Natural killer cell (primary cell): ENCODE measurements at regions of chr7 and their contacts with region 1.

Region 1: GRCh38 chr7:157273208-157274093 is 63.4 kb upstream of the DNAJB6 start:
- DNase-seq: peak; percentile 66 to 83
- ATAC-seq: peak; percentile 67 to 79 (median 70)
- H3K4me3 ChIP-seq: no peak overlapping the region
- H3K4me3 Mint-ChIP-seq: no peak overlapping the region
- H3K27ac ChIP-seq: no peak overlapping the region
- H3K27ac Mint-ChIP-seq: peak overlapping the region; percentile 58 to 72
- H3K4me1 ChIP-seq: peaks cover 45% of the 10 kb centered on the region
- H3K4me1 Mint-ChIP-seq: peaks cover 34 to 48% of the 10 kb centered on the region in 2 donors
- H3K27me3 ChIP-seq: no peaks in the 10 kb centered on the region
- H3K27me3 Mint-ChIP-seq: no peaks in the 10 kb centered on the region
- CTCF ChIP-seq: peak; percentile 92

Region 2: GRCh38 chr7:156949541-156950380 is 323.7 kb before region 1 on chr7 and contains the start of gene NOM1:
- intact Hi-C with region 1: loop called (anchors 10 kb)
- DNase-seq: peak; percentile 93 to 95
- ATAC-seq: peak; percentile 97 to 98 (median 97)
- H3K4me3 ChIP-seq: peak within 1 kb of the TSS; percentile 91
- H3K4me3 Mint-ChIP-seq: peak within 1 kb of the TSS; percentile 100
- H3K27ac ChIP-seq: peak within 1 kb of the TSS; percentile 30
- H3K27ac Mint-ChIP-seq: peak within 1 kb of the TSS; percentile 68 to 82
- H3K4me1 ChIP-seq: peaks cover 26% of the 10 kb centered on the region
- H3K4me1 Mint-ChIP-seq: peaks cover 10% of the 10 kb centered on the region in 2 donors
- H3K27me3 ChIP-seq: no peaks in the 10 kb centered on the region
- H3K27me3 Mint-ChIP-seq: peaks cover 19 to 20% of the 10 kb centered on the region in 2 donors
- CTCF ChIP-seq: peak; percentile 75
- total RNA-seq, gene NOM1: 22.5 to 35.6 (median 34.7) TPM

Region 3: DNA sequence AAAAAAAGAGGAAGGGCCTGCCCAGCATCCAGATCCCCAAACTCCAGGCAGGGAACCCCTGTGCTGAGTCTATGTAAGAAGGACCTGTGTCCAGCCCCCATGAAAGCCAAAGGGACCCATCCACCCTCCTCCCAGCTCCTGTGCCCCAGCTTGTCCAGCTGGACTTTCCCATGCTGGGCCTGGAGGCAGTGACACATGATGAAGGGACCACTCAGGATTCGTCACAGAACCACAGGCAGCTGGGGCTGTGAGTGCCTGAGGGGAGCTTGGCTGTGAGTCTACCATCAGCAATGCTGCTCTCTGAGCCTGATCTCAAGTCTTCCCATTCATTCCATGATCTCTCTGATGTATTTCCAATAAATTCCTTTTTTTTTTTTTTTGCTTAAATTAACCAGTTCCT is 226.8 kb before region 1 on chr7:
- intact Hi-C with region 1: no loop called
- DNase-seq: no peak
- ATAC-seq: no peak
- H3K4me3 ChIP-seq: no peak overlapping the region
- H3K4me3 Mint-ChIP-seq: no peak overlapping the region
- H3K27ac ChIP-seq: no peak overlapping the region
- H3K27ac Mint-ChIP-seq: no peak overlapping the region
- H3K4me1 ChIP-seq: no peaks in the 10 kb centered on the region
- H3K4me1 Mint-ChIP-seq: no peaks in the 10 kb centered on the region
- H3K27me3 ChIP-seq: no peaks in the 10 kb centered on the region
- H3K27me3 Mint-ChIP-seq: peaks cover 2 to 5% of the 10 kb centered on the region in 2 donors
- CTCF ChIP-seq: no peak

Region 4: DNA sequence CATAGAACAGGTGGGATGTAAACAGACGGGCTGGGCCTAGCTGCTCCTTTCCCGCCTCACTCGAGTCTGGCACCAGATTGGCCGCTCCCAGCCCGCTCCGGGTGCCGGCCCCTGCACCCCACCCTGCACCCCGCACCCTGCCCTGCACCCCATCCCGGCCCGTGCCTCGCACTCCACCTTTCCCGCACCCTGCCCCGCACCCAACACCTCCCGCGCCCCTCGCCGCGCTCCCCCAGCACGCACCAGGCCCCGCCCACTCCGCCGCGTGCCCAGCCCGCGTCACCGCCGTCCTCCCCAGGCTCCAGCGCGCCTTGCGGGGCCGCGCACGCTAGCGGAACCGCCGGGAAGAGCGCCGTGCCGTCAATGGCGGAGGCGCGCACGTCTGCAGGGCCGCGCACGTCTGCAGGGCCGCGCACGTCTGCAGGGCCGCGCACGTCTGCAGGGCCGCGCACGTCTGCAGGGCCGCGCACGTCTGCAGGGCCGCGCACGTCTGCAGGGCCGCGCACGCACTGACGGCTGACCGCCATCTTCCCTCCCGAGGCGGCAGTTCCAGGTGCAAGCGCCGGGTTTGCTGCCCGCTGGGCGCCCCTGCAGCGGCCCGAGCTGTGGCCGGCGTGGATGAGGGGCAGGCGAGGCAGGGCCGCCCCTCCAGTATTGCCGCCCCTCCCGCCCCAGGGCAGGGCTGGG is 134.9 kb before region 1 on chr7 and contains the start of gene UBE3C:
- intact Hi-C with region 1: loop called (anchors 10 kb)
- DNase-seq: peak; percentile 91 to 97
- ATAC-seq: peak; percentile 81 to 93 (median 82)
- H3K4me3 ChIP-seq: peak within 1 kb of the TSS; percentile 75
- H3K4me3 Mint-ChIP-seq: peak within 1 kb of the TSS; percentile 82
- H3K27ac ChIP-seq: peak within 1 kb of the TSS; percentile 91
- H3K27ac Mint-ChIP-seq: peak within 1 kb of the TSS; percentile 81 to 92
- H3K4me1 ChIP-seq: peaks cover 27% of the 10 kb centered on the region
- H3K4me1 Mint-ChIP-seq: peaks cover 37 to 43% of the 10 kb centered on the region in 2 donors
- H3K27me3 ChIP-seq: no peaks in the 10 kb centered on the region
- H3K27me3 Mint-ChIP-seq: no peaks in the 10 kb centered on the region
- CTCF ChIP-seq: no peak
- total RNA-seq, gene UBE3C: 44.6 to 56.7 (median 55.5) TPM

Region 5: GRCh38 chr7:157301610-157302120 is 28.2 kb after region 1 on chr7:
- intact Hi-C with region 1: loop called (anchors 1 kb)
- DNase-seq: no peak
- ATAC-seq: no peak
- H3K4me3 ChIP-seq: peak overlapping the region; percentile 20
- H3K4me3 Mint-ChIP-seq: peak overlapping the region; percentile 55
- H3K27ac ChIP-seq: peak overlapping the region; percentile 83
- H3K27ac Mint-ChIP-seq: peak overlapping the region; percentile 90 to 95
- H3K4me1 ChIP-seq: peaks cover 54% of the 10 kb centered on the region
- H3K4me1 Mint-ChIP-seq: peaks cover 57 to 70% of the 10 kb centered on the region in 2 donors
- H3K27me3 ChIP-seq: no peaks in the 10 kb centered on the region
- H3K27me3 Mint-ChIP-seq: no peaks in the 10 kb centered on the region
- CTCF ChIP-seq: no peak

Region 6: DNA sequence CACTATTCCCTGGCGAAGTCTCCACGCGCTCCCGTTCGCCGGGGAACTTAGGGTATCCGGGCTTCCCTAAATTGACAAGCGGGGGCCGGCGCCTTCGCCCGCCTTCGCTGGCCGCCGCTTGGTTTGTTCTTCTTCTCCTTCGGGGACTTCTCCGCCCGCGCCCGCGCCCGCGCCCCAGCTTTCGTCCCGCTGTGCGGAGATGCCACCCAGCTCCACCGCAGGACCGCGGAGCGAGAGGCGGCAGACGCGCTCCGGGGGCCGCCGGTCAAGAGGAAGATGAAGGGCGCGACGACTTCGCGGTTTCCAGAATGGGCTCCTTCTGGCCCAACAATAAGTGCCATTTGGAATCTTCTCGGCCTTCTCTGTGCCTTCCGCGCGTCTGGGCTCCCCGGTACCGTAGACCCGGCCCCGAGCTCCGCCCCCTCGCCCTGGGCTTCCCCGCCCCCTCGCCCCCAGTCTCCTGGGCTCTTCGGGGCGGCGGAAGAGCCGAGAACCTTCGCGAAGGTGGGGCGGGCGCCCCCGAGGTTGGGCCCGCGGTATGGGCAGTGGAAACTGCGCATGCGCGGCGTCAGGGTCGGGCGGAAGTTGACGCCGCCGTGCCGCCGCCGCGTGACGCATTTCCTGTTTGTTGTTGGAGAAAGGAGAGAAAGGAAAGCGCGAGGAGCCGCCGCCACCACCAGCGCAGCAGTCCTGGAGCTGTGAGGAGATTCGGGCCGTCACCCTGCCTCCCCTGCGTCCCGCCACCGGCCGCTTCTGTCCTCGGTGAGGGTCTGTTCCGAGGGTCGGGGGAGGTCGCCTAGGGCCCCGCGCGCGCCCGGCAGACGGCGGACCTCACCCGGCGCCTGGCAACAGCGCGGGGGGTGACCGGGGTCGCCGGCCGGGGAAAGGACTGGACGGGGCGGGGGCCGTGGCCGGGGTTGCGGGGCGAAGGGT is 63.2 kb after region 1 on chr7 and contains the start of gene DNAJB6:
- intact Hi-C with region 1: loop called (anchors 2 kb)
- DNase-seq: peak; percentile 97 to 98
- ATAC-seq: peak; percentile 80 to 91 (median 85)
- H3K4me3 ChIP-seq: peak within 1 kb of the TSS; percentile 96
- H3K4me3 Mint-ChIP-seq: peak within 1 kb of the TSS; percentile 99
- H3K27ac ChIP-seq: peak within 1 kb of the TSS; percentile 91
- H3K27ac Mint-ChIP-seq: peak within 1 kb of the TSS; percentile 95 to 96
- H3K4me1 ChIP-seq: peaks cover 42% of the 10 kb centered on the region
- H3K4me1 Mint-ChIP-seq: peaks cover 43 to 46% of the 10 kb centered on the region in 2 donors
- H3K27me3 ChIP-seq: no peaks in the 10 kb centered on the region
- H3K27me3 Mint-ChIP-seq: peaks cover 0 to 4% of the 10 kb centered on the region in 2 donors
- CTCF ChIP-seq: no peak
- total RNA-seq, gene DNAJB6: 309 to 343 (median 340) TPM

Region 7: DNA sequence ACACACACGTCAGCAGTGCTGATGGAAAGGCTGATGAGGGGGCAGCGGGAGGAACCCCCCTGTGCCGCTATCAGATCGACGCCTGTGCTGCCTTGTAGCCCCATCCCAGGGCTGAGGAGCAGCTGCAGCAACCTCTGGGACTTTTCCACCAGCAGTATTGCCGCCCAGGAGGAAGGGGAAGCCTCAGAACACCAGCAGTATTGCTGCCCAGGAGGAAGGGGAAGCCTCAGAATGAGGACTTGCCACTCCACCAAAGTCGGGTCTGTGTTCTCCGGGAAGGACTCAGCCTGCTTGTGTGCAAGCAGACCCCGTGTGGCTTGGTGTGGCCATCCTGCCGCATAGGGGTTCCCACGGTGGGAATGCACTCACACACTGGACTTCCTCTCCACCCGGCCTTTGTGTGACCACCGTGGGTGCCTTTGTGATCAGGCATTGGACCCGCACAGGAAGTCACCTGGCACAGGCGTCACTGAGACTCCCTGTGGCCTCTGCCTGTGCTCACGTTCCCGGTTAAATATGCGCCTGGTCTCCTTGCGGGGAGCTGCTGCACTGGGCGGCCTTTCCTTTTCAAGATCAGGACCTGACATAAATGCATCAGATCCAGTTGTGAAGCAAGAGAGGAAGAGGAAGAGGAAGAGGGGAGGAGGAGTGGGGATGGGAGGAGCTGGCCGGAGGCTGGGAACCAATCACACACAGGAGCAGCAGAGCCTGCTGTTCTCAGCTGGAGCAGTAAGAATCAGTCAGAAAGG is 311.8 kb after region 1 on chr7:
- intact Hi-C with region 1: no loop called
- DNase-seq: no peak
- ATAC-seq: no peak
- H3K4me3 ChIP-seq: no peak overlapping the region
- H3K4me3 Mint-ChIP-seq: no peak overlapping the region
- H3K27ac ChIP-seq: no peak overlapping the region
- H3K27ac Mint-ChIP-seq: no peak overlapping the region
- H3K4me1 ChIP-seq: peaks cover 6% of the 10 kb centered on the region
- H3K4me1 Mint-ChIP-seq: peaks cover 0 to 4% of the 10 kb centered on the region in 2 donors
- H3K27me3 ChIP-seq: peaks cover 29% of the 10 kb centered on the region
- H3K27me3 Mint-ChIP-seq: peaks cover 50 to 53% of the 10 kb centered on the region in 2 donors
- CTCF ChIP-seq: no peak